ENCODE measurements at regions of chr3 and their contacts with region 1.

Region 1: GRCh38 chr3:85081191-85081895 is 122.6 kb downstream of the CADM2 start:
- DNase-seq: peak in 41 of 42 donors; percentile 5 to 79 (median 49)

Region 2: DNA sequence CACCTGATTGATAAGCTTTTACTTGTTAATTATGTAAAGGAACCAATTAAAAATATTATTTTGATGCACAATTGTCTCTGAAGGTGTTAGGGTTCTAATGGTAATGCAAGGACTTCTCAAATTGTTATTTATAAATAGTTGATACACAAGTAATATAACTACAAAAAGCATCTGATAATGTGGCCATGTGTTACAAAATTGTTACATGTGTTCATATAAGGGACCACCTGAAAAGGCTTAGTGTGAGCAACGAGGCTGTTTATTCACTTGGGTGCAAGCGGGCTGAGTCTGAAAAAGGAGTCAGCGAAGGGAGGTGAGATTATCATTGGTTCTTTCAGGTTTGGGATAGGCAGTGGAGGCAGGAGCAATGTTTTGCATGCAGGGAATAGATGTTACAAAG is 544.4 kb before region 1 on chr3:
- intact Hi-C with region 1: no loop called
- DNase-seq: no peak

Region 3: GRCh38 chr3:84965141-84965540 is 116.2 kb before region 1 on chr3:
- intact Hi-C with region 1: loop called (anchors 10 kb)
- DNase-seq: peak in 40 of 42 donors; percentile 26 to 83 (median 56)

Measured in head of caudate nucleus (tissue), 42 donors.